HCT116 (cell line): ENCODE measurements at regions of chr12 and their contacts with region 1.

Region 1: DNA sequence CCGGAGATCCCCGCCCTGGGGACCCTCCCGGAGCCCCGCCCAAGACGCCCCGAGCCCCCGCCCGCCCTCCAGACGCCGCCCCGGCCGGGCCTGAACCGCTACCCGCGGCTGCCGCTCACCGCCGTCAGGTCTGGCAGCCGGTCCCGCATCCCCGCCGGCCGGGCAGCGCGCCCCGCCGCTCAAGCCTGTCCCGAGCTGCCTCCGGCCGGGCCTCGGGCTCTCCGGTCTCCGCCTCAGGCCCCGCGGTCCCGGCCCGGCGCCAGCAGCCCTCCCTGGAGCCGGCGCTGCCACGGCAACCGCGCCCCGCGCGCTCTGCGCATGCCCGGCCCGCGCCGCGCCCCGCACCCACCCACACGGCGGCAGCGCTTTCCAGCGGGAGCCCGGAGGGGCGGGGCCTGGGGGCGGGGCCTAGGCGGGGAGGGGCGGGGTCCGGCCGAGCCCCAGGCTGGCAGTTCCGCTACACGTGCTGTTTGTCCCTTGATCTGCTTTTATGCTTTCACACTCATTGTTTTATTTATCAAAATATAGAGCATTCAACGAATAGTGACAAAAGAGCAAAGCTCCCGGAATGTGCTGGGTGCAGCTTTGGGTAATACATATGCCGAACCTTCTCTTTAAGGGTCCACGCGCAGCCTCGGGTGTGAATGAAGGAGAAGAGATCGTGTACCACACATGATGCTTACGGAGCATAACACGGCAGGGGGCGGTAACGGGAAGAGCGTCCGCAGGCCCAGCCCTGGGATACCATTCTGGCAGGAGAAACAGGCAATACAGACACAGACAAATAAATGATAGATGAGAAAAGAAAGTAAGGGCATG is at the start of gene STX2:
- DNase-seq: peak; percentile 54
- ATAC-seq: peak; percentile 90
- H3K4me3 ChIP-seq: peak within 1 kb of the TSS; percentile 64 to 77
- H3K27ac ChIP-seq: peak within 1 kb of the TSS; percentile 42
- H3K4me1 ChIP-seq: peaks cover 12 to 20% of the 10 kb centered on the region in 2 experiments; a peak in 3 of 4 replicates
- H3K27me3 ChIP-seq: no peaks in the 10 kb centered on the region
- CTCF ChIP-seq: peak in 2 of 3 experiments; percentile 13 to 17; a peak in 2 of 6 replicates
- POLR2A ChIP-seq: peak; percentile 45
- RAD21 ChIP-seq: peak; percentile 29; the same call in 1 of the 2 replicates
- total RNA-seq, gene STX2: 19.2 TPM

Region 2: GRCh38 chr12:130147875-130148596 is 691.1 kb before region 1 on chr12:
- CTCF ChIA-PET with region 1: no interaction called
- POLR2A ChIA-PET with region 1: no interaction called
- RAD21 ChIA-PET with region 1: no interaction called
- intact Hi-C with region 1: no loop called
- DNase-seq: no peak
- ATAC-seq: no peak
- H3K4me3 ChIP-seq: no peak overlapping the region
- H3K27ac ChIP-seq: no peak overlapping the region
- H3K4me1 ChIP-seq: no peaks in the 10 kb centered on the region
- H3K27me3 ChIP-seq: no peaks in the 10 kb centered on the region
- CTCF ChIP-seq: no peak
- POLR2A ChIP-seq: no peak
- RAD21 ChIP-seq: no peak

Region 3: GRCh38 chr12:130803702-130804101 is 35.5 kb before region 1 on chr12:
- CTCF ChIA-PET with region 1: no interaction called
- POLR2A ChIA-PET with region 1: no interaction called
- RAD21 ChIA-PET with region 1: no interaction called
- intact Hi-C with region 1: no loop called
- DNase-seq: no peak
- ATAC-seq: no peak
- H3K4me3 ChIP-seq: no peak overlapping the region
- H3K27ac ChIP-seq: no peak overlapping the region
- H3K4me1 ChIP-seq: peaks cover 0 to 4% of the 10 kb centered on the region in 2 experiments; a peak in 1 of 4 replicates
- H3K27me3 ChIP-seq: no peaks in the 10 kb centered on the region
- CTCF ChIP-seq: no peak
- POLR2A ChIP-seq: no peak
- RAD21 ChIP-seq: no peak

Region 4: GRCh38 chr12:130871286-130872178 is 32.4 kb after region 1 on chr12 and contains the start of gene RAN:
- CTCF ChIA-PET with region 1: interaction called, 3 read pairs
- POLR2A ChIA-PET with region 1: no interaction called
- RAD21 ChIA-PET with region 1: no interaction called
- intact Hi-C with region 1: loop called (anchors 1 kb)
- DNase-seq: peak; percentile 84
- ATAC-seq: peak; percentile 85
- H3K4me3 ChIP-seq: peak within 1 kb of the TSS; percentile 96 to 97
- H3K27ac ChIP-seq: peak within 1 kb of the TSS; percentile 90
- H3K4me1 ChIP-seq: peaks cover 20 to 35% of the 10 kb centered on the region in 2 experiments
- H3K27me3 ChIP-seq: no peaks in the 10 kb centered on the region
- CTCF ChIP-seq: no peak
- POLR2A ChIP-seq: peak; percentile 64
- RAD21 ChIP-seq: no peak
- total RNA-seq, gene RAN: 1,420 TPM